Adrenal gland (tissue), 19 donors: ENCODE measurements at regions of chr3 and their contacts with region 1.

Region 1: DNA sequence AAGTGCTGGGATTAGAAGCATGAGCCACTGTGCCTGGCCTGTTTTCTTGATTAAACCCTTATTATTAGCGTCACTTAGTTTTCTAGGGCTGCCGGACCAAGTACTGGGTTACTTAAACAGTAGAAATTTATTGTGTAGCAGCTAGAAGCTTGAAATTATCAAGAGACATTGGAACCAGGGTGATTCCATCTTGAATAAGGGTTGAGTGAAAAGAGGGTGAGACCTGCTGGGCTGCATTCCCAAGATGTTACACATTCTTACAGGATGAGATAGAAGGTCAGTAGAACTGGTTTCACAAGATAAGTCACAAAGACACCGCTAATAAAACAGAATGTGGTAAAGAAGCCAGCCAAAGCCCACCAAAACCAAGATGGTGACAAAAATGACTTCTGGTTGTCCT is 18.7 kb upstream of the FSTL1 start:
- DNase-seq: no peak
- H3K4me3 ChIP-seq: no peak overlapping the region
- H3K27ac ChIP-seq: no peak overlapping the region
- H3K4me1 ChIP-seq: no peaks in the 10 kb centered on the region
- H3K27me3 ChIP-seq: no peaks in the 10 kb centered on the region
- CTCF ChIP-seq: no peak
- POLR2A ChIP-seq: no peak

Region 2: DNA sequence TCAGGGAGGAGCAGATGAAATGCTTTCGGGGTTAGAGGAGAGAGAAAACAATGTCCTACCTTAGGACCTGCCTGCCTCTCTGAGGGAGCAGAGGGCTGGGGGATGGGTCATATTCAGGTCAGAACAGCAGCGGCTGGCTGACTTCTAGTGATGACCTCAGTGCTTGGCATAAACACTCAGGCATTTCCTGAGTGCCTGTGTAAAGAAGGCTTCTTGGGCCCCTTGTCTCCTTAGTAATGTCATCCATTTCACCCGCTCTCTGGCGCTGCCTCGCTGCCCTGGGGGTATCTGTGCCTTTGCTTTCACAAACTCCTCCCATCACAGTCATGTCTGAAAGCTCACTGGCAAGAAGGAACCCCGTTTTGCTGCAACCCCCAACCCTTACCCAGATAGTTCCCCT is 292.3 kb before region 1 on chr3:
- intact Hi-C with region 1: no loop called
- DNase-seq: peak; percentile 52 to 82 (median 70)
- H3K4me3 ChIP-seq: no peak overlapping the region
- H3K27ac ChIP-seq: peak overlapping the region in 3 of 5 donors; percentile 8 to 42 (median 28)
- H3K4me1 ChIP-seq: peaks cover 6 to 9% of the 10 kb centered on the region in 2 donors
- H3K27me3 ChIP-seq: no peaks in the 10 kb centered on the region
- CTCF ChIP-seq: no peak
- POLR2A ChIP-seq: no peak

Region 3: GRCh38 chr3:120302361-120302760 is 167.1 kb before region 1 on chr3:
- intact Hi-C with region 1: no loop called
- DNase-seq: peak; percentile 66 to 87 (median 76)
- H3K4me3 ChIP-seq: no peak overlapping the region
- H3K27ac ChIP-seq: peak overlapping the region; percentile 30 to 81 (median 65)
- H3K4me1 ChIP-seq: peaks cover 8 to 16% of the 10 kb centered on the region in 2 donors
- H3K27me3 ChIP-seq: no peaks in the 10 kb centered on the region
- CTCF ChIP-seq: no peak
- POLR2A ChIP-seq: peak in 1 of 2 donors; percentile 49

Region 4: GRCh38 chr3:120544361-120544760 is 74.9 kb after region 1 on chr3:
- intact Hi-C with region 1: loop called in 1 of 2 experiments (anchors 10 kb)
- DNase-seq: no peak
- H3K4me3 ChIP-seq: no peak overlapping the region
- H3K27ac ChIP-seq: no peak overlapping the region
- H3K4me1 ChIP-seq: no peaks in the 10 kb centered on the region
- H3K27me3 ChIP-seq: no peaks in the 10 kb centered on the region
- CTCF ChIP-seq: no peak
- POLR2A ChIP-seq: no peak